PC-3 (cell line): ENCODE measurements at regions of chr14 and their contacts with region 1.

Region 1: GRCh38 chr14:78697341-78697740 is 527.2 kb downstream of the NRXN3 start:
- DNase-seq: peak; percentile 56
- ATAC-seq: no peak; the same call in 1 of the 2 replicates
- H3K4me3 ChIP-seq: no peak overlapping the region
- H3K27ac ChIP-seq: no peak overlapping the region
- H3K4me1 ChIP-seq: no peaks in the 10 kb centered on the region
- H3K27me3 ChIP-seq: no peaks in the 10 kb centered on the region
- CTCF ChIP-seq: peak; percentile 70

Region 2: GRCh38 chr14:77862154-77862786 is 835.1 kb before region 1 on chr14:
- CTCF ChIA-PET with region 1: no interaction called
- POLR2A ChIA-PET with region 1: no interaction called
- intact Hi-C with region 1: loop called (anchors 5 kb)
- DNase-seq: peak; percentile 78
- ATAC-seq: peak; percentile 87
- H3K4me3 ChIP-seq: no peak overlapping the region
- H3K27ac ChIP-seq: no peak overlapping the region
- H3K4me1 ChIP-seq: no peaks in the 10 kb centered on the region
- H3K27me3 ChIP-seq: no peaks in the 10 kb centered on the region
- CTCF ChIP-seq: peak; percentile 97

Region 3: GRCh38 chr14:78022059-78022458 is 675.3 kb before region 1 on chr14:
- CTCF ChIA-PET with region 1: no interaction called
- POLR2A ChIA-PET with region 1: no interaction called
- intact Hi-C with region 1: loop called (anchors 5 kb)
- DNase-seq: peak; percentile 77
- ATAC-seq: peak; percentile 73
- H3K4me3 ChIP-seq: no peak overlapping the region
- H3K27ac ChIP-seq: no peak overlapping the region
- H3K4me1 ChIP-seq: no peaks in the 10 kb centered on the region
- H3K27me3 ChIP-seq: no peaks in the 10 kb centered on the region
- CTCF ChIP-seq: peak; percentile 86

Region 4: GRCh38 chr14:78737116-78737515 is 39.8 kb after region 1 on chr14:
- CTCF ChIA-PET with region 1: no interaction called
- POLR2A ChIA-PET with region 1: no interaction called
- intact Hi-C with region 1: no loop called
- DNase-seq: no peak
- ATAC-seq: no peak
- H3K4me3 ChIP-seq: no peak overlapping the region
- H3K27ac ChIP-seq: no peak overlapping the region
- H3K4me1 ChIP-seq: no peaks in the 10 kb centered on the region
- H3K27me3 ChIP-seq: no peaks in the 10 kb centered on the region
- CTCF ChIP-seq: no peak